ENCODE measurements at regions of chr4 and their contacts with region 1.

Region 1: DNA sequence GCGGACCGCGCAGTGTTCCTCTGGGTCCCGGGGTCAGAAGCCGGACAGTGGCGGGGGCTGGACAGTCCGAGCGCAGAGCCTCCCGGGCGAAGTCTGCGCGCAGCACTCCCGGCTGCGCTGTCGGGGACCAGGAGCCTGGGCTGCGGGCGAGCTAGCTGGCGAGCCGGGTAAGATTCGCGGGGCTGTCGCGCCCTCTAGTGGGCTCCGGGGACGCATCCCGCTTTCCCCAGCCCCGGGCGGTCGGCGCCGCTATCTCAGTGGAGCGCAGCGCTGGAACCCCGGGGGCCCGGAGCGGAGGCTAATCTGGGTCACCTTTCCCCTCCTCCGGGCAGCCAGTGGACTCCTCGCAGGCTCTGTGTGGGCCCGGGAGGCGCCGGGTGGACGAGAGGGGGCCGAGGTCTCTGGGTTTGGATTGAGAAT is 4.2 kb downstream of the PDGFRA start:
- DNase-seq: no peak
- ATAC-seq: peak; percentile 97
- H3K4me3 ChIP-seq: peak overlapping the region; percentile 63; the same call in 1 of the 2 replicates
- H3K27ac ChIP-seq: no peak overlapping the region
- H3K4me1 ChIP-seq: 0 out of 2 replicates have a peak, but pooled peaks cover 7% of the 10 kb centered on the region
- H3K27me3 ChIP-seq: peaks cover 18 to 22% of the 10 kb centered on the region in 2 experiments
- CTCF ChIP-seq: peak; percentile 74 to 84 (median 83)
- EP300 ChIP-seq: no peak
- POLR2A ChIP-seq: no peak
- RAD21 ChIP-seq: peak; percentile 73

Region 2: GRCh38 chr4:52234561-52235440 is 1998.5 kb before region 1 on chr4:
- CTCF ChIA-PET with region 1: no interaction called
- POLR2A ChIA-PET with region 1: no interaction called
- RAD21 ChIA-PET with region 1: no interaction called
- SMC1A ChIA-PET with region 1: no interaction called
- in situ Hi-C with region 1: no loop called
- intact Hi-C with region 1: no loop called
- DNase-seq: no peak
- ATAC-seq: no peak
- H3K4me3 ChIP-seq: no peak overlapping the region
- H3K27ac ChIP-seq: no peak overlapping the region
- H3K4me1 ChIP-seq: no peaks in the 10 kb centered on the region
- H3K27me3 ChIP-seq: no peaks in the 10 kb centered on the region
- CTCF ChIP-seq: peak in 2 of 3 experiments; percentile 8 to 29; a peak in 1 of 6 replicates
- EP300 ChIP-seq: no peak
- POLR2A ChIP-seq: no peak
- RAD21 ChIP-seq: peak; percentile 31; the same call in 1 of the 2 replicates

Region 3: GRCh38 chr4:52376132-52376704 is 1857.1 kb before region 1 on chr4:
- CTCF ChIA-PET with region 1: interaction called, 8 read pairs
- POLR2A ChIA-PET with region 1: no interaction called
- RAD21 ChIA-PET with region 1: interaction called, 10 read pairs
- SMC1A ChIA-PET with region 1: interaction called, 3 read pairs
- in situ Hi-C with region 1: loop called (anchors 5 kb)
- intact Hi-C with region 1: loop called (anchors 5 kb)
- DNase-seq: no peak
- ATAC-seq: peak; percentile 24; the same call in 1 of the 3 replicates
- H3K4me3 ChIP-seq: no peak overlapping the region
- H3K27ac ChIP-seq: no peak overlapping the region
- H3K4me1 ChIP-seq: no peaks in the 10 kb centered on the region
- H3K27me3 ChIP-seq: no peaks in the 10 kb centered on the region
- CTCF ChIP-seq: peak; percentile 20 to 53 (median 41); a peak in 4 of 6 replicates
- EP300 ChIP-seq: no peak
- POLR2A ChIP-seq: no peak
- RAD21 ChIP-seq: peak; percentile 68

Region 4: DNA sequence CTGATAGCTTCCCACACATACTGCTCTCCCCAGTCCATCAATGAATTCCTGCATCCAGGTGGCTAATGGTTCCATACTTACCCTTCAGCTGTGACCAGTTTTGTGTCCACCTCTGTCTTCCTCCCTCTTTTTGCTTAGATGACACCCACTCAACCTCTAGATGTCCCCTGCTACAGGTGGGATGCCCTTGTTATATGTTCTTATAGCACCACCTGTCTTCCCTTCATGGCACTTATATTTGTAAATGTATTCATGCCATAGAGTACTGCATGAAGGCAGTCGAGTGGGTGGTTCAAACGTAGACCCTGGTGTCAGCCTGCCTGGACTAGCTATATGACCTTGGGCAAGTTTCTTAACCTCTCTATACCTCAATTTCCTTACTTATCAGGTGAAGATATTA is 1567.7 kb before region 1 on chr4:
- CTCF ChIA-PET with region 1: no interaction called
- POLR2A ChIA-PET with region 1: no interaction called
- RAD21 ChIA-PET with region 1: interaction called, 3 read pairs
- SMC1A ChIA-PET with region 1: no interaction called
- in situ Hi-C with region 1: no loop called
- intact Hi-C with region 1: loop called (anchors 2 kb)
- DNase-seq: no peak
- ATAC-seq: peak; percentile 94
- H3K4me3 ChIP-seq: no peak overlapping the region
- H3K27ac ChIP-seq: no peak overlapping the region
- H3K4me1 ChIP-seq: 0 out of 2 replicates have a peak, but pooled peaks cover 2% of the 10 kb centered on the region
- H3K27me3 ChIP-seq: no peaks in the 10 kb centered on the region
- CTCF ChIP-seq: peak; percentile 50 to 76 (median 52); a peak in 5 of 6 replicates
- EP300 ChIP-seq: no peak
- POLR2A ChIP-seq: no peak
- RAD21 ChIP-seq: peak; percentile 87

Region 5: DNA sequence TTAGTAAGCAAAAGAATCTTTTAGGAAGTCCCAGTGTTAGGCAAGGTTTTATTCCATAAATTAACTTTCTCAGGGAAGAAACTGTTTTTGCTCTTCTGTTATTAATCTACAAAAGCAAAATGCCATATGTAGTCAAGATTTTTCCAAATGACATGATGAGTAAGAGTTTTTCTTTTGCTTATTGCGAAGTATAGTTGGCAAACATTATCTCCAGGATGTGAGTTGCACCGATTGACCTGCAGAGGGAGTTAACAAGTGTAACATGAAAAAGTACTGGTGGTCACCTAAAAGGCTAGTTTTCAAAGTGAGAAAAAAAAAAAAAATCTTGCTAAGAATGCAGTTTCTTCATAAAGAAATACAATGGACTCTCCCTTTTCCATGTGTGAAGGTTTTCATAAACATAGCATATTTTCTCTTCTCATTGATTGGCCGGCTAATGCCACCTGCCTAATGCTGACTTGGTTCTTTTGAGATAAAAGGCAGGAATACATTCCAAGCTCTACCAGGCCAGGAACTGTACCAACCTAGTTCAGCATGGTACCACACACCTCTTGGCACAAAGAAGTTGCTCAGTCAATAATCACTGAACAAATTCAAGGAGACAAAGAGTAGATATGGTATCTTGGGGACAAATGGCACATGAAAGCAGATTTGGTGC is 742.2 kb before region 1 on chr4:
- CTCF ChIA-PET with region 1: no interaction called
- POLR2A ChIA-PET with region 1: no interaction called
- RAD21 ChIA-PET with region 1: no interaction called
- SMC1A ChIA-PET with region 1: interaction called, 4 read pairs
- in situ Hi-C with region 1: no loop called
- intact Hi-C with region 1: loop called (anchors 2 kb)
- DNase-seq: no peak
- ATAC-seq: peak; percentile 89
- H3K4me3 ChIP-seq: no peak overlapping the region
- H3K27ac ChIP-seq: no peak overlapping the region
- H3K4me1 ChIP-seq: no peaks in the 10 kb centered on the region
- H3K27me3 ChIP-seq: peaks cover 0 to 3% of the 10 kb centered on the region in 2 experiments; a peak in 1 of 4 replicates
- CTCF ChIP-seq: peak; percentile 53 to 67 (median 62)
- EP300 ChIP-seq: no peak
- POLR2A ChIP-seq: no peak
- RAD21 ChIP-seq: peak; percentile 64

Region 6: GRCh38 chr4:53929955-53930798 is 303.1 kb before region 1 on chr4:
- CTCF ChIA-PET with region 1: interaction called, 68 read pairs
- POLR2A ChIA-PET with region 1: no interaction called
- RAD21 ChIA-PET with region 1: interaction called, 29 read pairs
- SMC1A ChIA-PET with region 1: interaction called, 19 read pairs
- in situ Hi-C with region 1: loop called (anchors 5 kb)
- intact Hi-C with region 1: no loop called
- DNase-seq: peak; percentile 13
- ATAC-seq: peak; percentile 87
- H3K4me3 ChIP-seq: no peak overlapping the region
- H3K27ac ChIP-seq: no peak overlapping the region
- H3K4me1 ChIP-seq: no peaks in the 10 kb centered on the region
- H3K27me3 ChIP-seq: no peaks in the 10 kb centered on the region; a peak in 1 of 4 replicates
- CTCF ChIP-seq: peak; percentile 63 to 78 (median 65)
- EP300 ChIP-seq: no peak
- POLR2A ChIP-seq: no peak
- RAD21 ChIP-seq: peak; percentile 91